Activated CD8-positive, alpha-beta T cell treated with anti-CD3 and anti-CD28 coated beads, Interleukin-2, amount 10 ng/mL, durations not matched to agents 7 days and 5 days (primary cell): ENCODE measurements at regions of chr18 and their contacts with region 1.

Region 1: DNA sequence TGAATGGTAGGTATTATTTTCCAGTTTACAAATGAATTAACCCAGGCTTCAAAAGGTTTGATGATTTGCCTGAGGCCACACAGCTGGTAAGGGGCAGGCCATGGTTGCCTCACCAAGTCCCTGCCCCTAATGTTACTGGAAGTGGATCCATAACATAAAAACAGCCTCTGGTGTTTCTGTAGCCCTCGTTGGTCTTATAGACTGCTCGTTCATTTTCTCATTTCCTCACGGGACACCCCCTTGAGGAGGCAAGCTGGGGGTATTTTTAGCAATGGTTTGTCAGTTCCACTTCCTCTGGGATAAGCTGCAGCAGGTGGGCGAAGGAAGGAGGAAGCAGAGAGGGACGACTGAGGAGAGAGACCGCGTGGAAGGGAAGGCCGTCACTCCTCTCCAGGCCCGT is 32.9 kb upstream of the NDUFV2 start:
- DNase-seq: no peak
- ATAC-seq: no peak
- H3K4me3 Mint-ChIP-seq: no peak overlapping the region
- H3K27ac Mint-ChIP-seq: peak overlapping the region; percentile 49
- H3K4me1 Mint-ChIP-seq: peaks cover 18% of the 10 kb centered on the region
- H3K27me3 Mint-ChIP-seq: no peaks in the 10 kb centered on the region

Region 2: DNA sequence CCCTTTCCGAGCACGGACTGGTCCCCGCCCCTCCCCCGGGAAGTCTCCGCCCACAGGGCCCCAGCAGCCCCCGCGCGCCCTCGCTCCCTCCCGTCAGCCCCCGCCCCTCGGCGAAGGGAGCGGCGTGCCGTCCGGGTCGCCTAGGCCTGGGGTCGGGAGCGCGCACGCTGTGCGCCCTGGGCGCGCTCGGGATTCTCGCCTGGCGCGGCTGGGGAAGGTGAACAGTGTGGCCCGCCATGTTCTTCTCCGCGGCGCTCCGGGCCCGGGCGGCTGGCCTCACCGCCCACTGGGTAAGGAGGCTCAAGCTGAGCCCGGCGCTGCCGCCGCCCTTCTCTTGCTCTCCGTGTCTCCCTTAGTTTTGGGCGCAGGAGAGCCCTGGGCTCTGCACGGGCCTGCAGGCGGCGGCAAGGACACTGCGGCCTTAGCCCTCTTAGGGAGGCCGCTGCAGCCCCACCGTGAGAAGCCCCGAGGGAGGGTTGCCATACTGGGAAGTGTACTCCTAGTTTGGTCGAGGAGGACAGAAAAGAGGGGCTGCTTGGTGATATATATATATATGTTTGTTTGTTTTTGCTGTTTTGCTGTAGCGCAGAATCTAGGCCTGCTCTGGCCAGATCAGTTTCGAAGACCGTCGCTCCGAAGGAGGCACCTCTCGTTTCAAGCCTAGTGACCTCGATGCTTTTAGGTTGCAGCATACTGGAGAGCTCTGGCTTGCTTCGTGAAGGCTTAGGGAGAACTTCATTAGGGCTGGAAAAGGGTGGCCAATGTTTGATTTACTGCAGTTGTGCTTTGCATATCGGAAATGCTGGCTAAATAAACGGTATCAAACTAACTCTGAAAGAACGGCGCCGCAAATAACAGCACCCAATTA is 33.1 kb after region 1 on chr18 and contains the start of gene NDUFV2:
- CTCF ChIA-PET with region 1: interaction called, 27 read pairs
- POLR2A ChIA-PET with region 1: interaction called, 4 read pairs
- DNase-seq: peak; percentile 98
- ATAC-seq: peak; percentile 91
- H3K4me3 Mint-ChIP-seq: peak within 1 kb of the TSS; percentile 89
- H3K27ac Mint-ChIP-seq: peak within 1 kb of the TSS; percentile 97
- H3K4me1 Mint-ChIP-seq: peaks cover 48% of the 10 kb centered on the region
- H3K27me3 Mint-ChIP-seq: no peaks in the 10 kb centered on the region
- total RNA-seq, gene NDUFV2: 200 to 206 TPM

Region 3: GRCh38 chr18:9109523-9109922 is 39.9 kb after region 1 on chr18:
- CTCF ChIA-PET with region 1: interaction called, 27 read pairs
- POLR2A ChIA-PET with region 1: interaction called, 3 read pairs
- DNase-seq: no peak
- ATAC-seq: no peak
- H3K4me3 Mint-ChIP-seq: peak overlapping the region; percentile 30
- H3K27ac Mint-ChIP-seq: peak overlapping the region; percentile 62
- H3K4me1 Mint-ChIP-seq: peaks cover 83% of the 10 kb centered on the region
- H3K27me3 Mint-ChIP-seq: no peaks in the 10 kb centered on the region

Region 4: GRCh38 chr18:9117980-9118841 is 48.6 kb after region 1 on chr18:
- CTCF ChIA-PET with region 1: interaction called, 22 read pairs
- POLR2A ChIA-PET with region 1: no interaction called
- DNase-seq: no peak
- ATAC-seq: peak; percentile 48
- H3K4me3 Mint-ChIP-seq: peak overlapping the region; percentile 59
- H3K27ac Mint-ChIP-seq: peak overlapping the region; percentile 86
- H3K4me1 Mint-ChIP-seq: peaks cover 75% of the 10 kb centered on the region
- H3K27me3 Mint-ChIP-seq: no peaks in the 10 kb centered on the region

Region 5: DNA sequence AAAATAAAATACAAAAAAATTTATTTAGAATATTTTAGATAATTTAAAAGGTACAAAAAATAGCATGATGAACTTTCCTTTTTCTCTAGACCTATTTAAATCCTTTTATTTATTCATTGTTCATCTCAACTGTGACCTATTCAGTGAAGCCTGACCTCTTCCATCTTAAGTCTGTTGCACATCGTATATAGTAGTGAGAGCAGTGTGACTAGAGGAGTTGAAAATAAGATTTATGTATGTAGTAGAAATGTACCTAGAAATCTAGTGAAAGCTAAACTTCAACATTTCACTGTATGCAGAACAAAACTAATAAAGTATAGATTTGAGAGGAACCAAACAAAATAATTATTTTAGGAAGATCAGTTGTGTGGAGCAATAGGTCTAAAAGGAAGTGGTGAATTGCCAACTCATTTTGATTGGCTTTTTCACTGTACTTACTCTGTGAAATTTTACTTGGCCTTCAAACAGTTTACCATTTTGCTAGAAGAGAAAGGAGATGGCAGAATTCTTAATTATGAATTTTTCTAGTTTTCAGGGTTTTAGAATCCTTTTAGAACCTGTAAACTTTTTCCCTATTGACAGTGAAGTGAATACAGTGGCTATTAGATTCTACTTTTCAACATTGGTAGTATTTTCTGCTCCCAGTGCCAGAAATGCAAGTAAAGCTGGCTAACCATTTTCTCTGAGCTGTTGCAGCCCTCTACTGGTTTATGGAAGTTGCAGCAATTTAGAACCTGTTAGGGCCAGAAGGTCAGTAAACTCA is 78.0 kb after region 1 on chr18:
- CTCF ChIA-PET with region 1: interaction called, 35 read pairs
- POLR2A ChIA-PET with region 1: interaction called, 3 read pairs
- DNase-seq: peak; percentile 61
- ATAC-seq: peak; percentile 74
- H3K4me3 Mint-ChIP-seq: peak overlapping the region; percentile 1
- H3K27ac Mint-ChIP-seq: peak overlapping the region; percentile 69
- H3K4me1 Mint-ChIP-seq: peaks cover 75% of the 10 kb centered on the region
- H3K27me3 Mint-ChIP-seq: no peaks in the 10 kb centered on the region